ENCODE measurements at regions of chrX and their contacts with region 1.

Region 1: GRCh38 chrX:88425739-88426138 is 321.3 kb upstream of the CPXCR1 start:
- DNase-seq: peak in 1 of 2 experiments; percentile 9
- H3K4me3 ChIP-seq: no peak overlapping the region
- H3K4me3 Mint-ChIP-seq: no peak overlapping the region
- H3K27ac Mint-ChIP-seq: no peak overlapping the region
- H3K4me1 ChIP-seq: no peaks in the 10 kb centered on the region
- H3K4me1 Mint-ChIP-seq: no peaks in the 10 kb centered on the region
- H3K27me3 ChIP-seq: no peaks in the 10 kb centered on the region
- H3K27me3 Mint-ChIP-seq: no peaks in the 10 kb centered on the region
- CTCF ChIP-seq: peak in 1 of 2 experiments; percentile 28

Region 2: DNA sequence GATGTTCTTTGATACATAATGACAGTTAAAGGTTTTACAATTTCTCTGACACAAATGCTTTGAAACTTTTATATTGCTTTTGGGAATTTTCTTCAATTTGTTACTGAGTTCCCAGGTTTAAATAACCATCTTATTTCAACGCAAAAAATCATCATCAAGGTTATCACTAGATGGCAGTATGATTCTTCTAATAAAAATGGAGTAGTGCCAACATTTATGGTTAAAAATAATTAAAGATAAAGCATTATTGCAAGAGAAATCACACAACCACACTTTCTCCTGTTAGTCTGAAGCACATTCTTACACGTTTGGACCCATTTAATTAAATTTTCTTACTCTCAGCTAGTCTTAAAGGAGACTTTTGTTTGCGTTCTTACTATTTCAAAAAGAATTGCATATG is 290.0 kb before region 1 on chrX:
- CTCF ChIA-PET with region 1: no interaction called
- POLR2A ChIA-PET with region 1: no interaction called
- intact Hi-C with region 1: loop called (anchors 10 kb)
- DNase-seq: peak in 1 of 2 experiments; percentile 1
- H3K4me3 ChIP-seq: no peak overlapping the region
- H3K4me3 Mint-ChIP-seq: no peak overlapping the region
- H3K27ac Mint-ChIP-seq: no peak overlapping the region
- H3K4me1 ChIP-seq: no peaks in the 10 kb centered on the region
- H3K4me1 Mint-ChIP-seq: no peaks in the 10 kb centered on the region
- H3K27me3 ChIP-seq: no peaks in the 10 kb centered on the region
- H3K27me3 Mint-ChIP-seq: no peaks in the 10 kb centered on the region
- CTCF ChIP-seq: peak in 1 of 2 experiments; percentile 15

Region 3: GRCh38 chrX:88363318-88363717 is 62.4 kb before region 1 on chrX:
- CTCF ChIA-PET with region 1: no interaction called
- POLR2A ChIA-PET with region 1: no interaction called
- intact Hi-C with region 1: no loop called
- DNase-seq: no peak
- H3K4me3 ChIP-seq: no peak overlapping the region
- H3K4me3 Mint-ChIP-seq: no peak overlapping the region
- H3K27ac Mint-ChIP-seq: no peak overlapping the region
- H3K4me1 ChIP-seq: no peaks in the 10 kb centered on the region
- H3K4me1 Mint-ChIP-seq: no peaks in the 10 kb centered on the region
- H3K27me3 ChIP-seq: no peaks in the 10 kb centered on the region
- H3K27me3 Mint-ChIP-seq: no peaks in the 10 kb centered on the region
- CTCF ChIP-seq: no peak

Region 4: GRCh38 chrX:88397551-88397950 is 28.2 kb before region 1 on chrX:
- CTCF ChIA-PET with region 1: no interaction called
- POLR2A ChIA-PET with region 1: no interaction called
- intact Hi-C with region 1: no loop called
- DNase-seq: no peak
- H3K4me3 ChIP-seq: no peak overlapping the region
- H3K4me3 Mint-ChIP-seq: no peak overlapping the region
- H3K27ac Mint-ChIP-seq: no peak overlapping the region
- H3K4me1 ChIP-seq: no peaks in the 10 kb centered on the region
- H3K4me1 Mint-ChIP-seq: no peaks in the 10 kb centered on the region
- H3K27me3 ChIP-seq: no peaks in the 10 kb centered on the region
- H3K27me3 Mint-ChIP-seq: no peaks in the 10 kb centered on the region
- CTCF ChIP-seq: no peak

Region 5: GRCh38 chrX:88439935-88440334 is 14.2 kb after region 1 on chrX:
- CTCF ChIA-PET with region 1: no interaction called
- POLR2A ChIA-PET with region 1: no interaction called
- intact Hi-C with region 1: no loop called
- DNase-seq: no peak
- H3K4me3 ChIP-seq: no peak overlapping the region
- H3K4me3 Mint-ChIP-seq: no peak overlapping the region
- H3K27ac Mint-ChIP-seq: no peak overlapping the region
- H3K4me1 ChIP-seq: peaks cover 5% of the 10 kb centered on the region; the same call in 1 of the 2 replicates
- H3K4me1 Mint-ChIP-seq: peaks cover 15% of the 10 kb centered on the region
- H3K27me3 ChIP-seq: no peaks in the 10 kb centered on the region
- H3K27me3 Mint-ChIP-seq: no peaks in the 10 kb centered on the region
- CTCF ChIP-seq: no peak

Region 6: DNA sequence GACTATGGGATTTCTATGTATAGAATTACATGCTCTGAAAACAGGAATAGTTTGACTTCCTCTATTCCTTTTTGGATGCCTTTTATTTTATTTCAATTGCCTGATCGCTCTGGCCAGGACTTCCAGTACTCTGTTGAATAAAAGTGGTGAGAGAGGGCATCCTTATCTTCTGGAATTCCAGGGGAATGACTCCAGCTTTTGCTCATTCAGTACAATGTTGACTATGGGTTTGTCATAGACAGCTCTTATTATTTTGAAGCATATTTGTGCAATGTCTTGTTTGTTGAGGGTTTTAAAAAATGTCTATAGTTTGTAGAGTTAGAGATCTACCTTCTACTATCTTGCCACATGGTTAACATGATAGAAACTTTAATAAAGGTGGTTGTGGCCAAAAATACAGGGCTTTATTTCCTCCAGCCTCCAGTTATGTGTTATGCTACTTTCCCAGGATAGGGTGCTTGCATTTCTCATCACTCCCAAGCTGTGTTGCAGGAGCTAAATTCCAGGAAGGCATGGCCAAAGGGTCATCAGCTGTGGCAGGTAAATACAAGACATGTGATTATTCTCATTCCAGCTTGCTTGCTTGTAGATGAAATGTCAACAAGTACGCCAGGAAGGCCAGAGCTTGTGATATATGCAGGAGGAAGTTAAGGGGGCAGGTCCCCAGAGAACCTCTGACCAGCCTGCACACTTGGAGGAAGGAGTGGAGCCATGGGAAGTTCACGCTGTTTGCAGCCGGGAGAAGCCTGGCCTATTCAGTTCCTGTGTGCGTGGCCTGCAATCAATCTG is 178.9 kb after region 1 on chrX:
- CTCF ChIA-PET with region 1: no interaction called
- POLR2A ChIA-PET with region 1: no interaction called
- intact Hi-C with region 1: loop called (anchors 2 kb)
- DNase-seq: peak; percentile 70 to 84
- H3K4me3 ChIP-seq: no peak overlapping the region
- H3K4me3 Mint-ChIP-seq: peak overlapping the region; percentile 69
- H3K27ac Mint-ChIP-seq: peak overlapping the region; percentile 79
- H3K4me1 ChIP-seq: peaks cover 31% of the 10 kb centered on the region
- H3K4me1 Mint-ChIP-seq: no peaks in the 10 kb centered on the region
- H3K27me3 ChIP-seq: no peaks in the 10 kb centered on the region
- H3K27me3 Mint-ChIP-seq: no peaks in the 10 kb centered on the region
- CTCF ChIP-seq: no peak

Measured in Caco-2 (cell line).